GM13977 (cell line): ENCODE measurements at regions of chr3 and their contacts with region 1.

Region 1: GRCh38 chr3:194682694-194683310 is 2.9 kb upstream of the FAM43A start:
- DNase-seq: peak; percentile 85
- CTCF ChIP-seq: peak; percentile 81

Region 2: DNA sequence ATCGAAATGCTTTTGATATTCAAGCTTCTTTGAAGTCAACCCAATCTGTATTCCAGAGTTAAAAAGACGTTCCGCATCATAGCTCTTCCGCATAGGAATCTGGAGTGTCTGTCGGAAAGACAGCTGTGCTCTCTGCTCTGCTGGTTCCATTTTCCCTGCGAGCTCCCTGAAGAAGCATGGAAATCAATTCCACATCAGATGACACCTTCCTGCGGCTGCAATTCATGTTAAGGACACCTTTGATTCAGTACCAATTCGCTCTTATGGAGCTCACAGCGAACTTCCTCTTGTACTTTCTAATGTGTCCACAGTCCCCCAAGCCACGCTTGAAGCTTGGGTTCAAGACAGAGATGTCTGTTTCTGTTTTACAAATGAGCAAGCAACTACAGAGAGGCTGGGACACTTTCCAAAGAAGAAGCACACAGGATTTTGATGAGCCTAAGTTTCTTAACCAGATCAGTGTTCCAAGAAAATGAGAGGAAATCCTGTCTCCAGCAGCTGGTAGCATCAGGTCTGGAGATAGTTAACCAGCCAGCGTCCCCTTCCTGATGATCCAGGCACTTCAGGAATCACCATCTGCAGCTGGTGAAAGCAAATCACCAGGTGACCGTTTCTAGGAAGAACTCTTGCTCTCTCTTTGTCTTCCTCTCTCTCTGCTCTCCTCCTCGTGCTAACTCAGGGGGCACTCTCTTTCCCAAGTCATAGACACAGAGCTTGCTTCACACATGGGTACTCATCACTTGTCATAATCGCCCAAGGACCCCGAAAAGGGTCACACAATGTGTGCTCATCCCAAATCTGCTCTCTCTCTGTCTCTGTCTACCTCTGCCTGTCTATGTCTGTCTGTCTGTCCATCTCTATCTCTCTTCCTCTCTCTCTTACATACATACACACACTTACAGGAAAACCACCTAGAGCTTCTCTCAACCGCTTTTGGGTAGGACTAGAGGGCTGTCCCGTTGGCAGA is 284.6 kb after region 1 on chr3:
- in situ Hi-C with region 1: loop called (anchors 25 kb)
- DNase-seq: no peak
- CTCF ChIP-seq: no peak

Region 3: DNA sequence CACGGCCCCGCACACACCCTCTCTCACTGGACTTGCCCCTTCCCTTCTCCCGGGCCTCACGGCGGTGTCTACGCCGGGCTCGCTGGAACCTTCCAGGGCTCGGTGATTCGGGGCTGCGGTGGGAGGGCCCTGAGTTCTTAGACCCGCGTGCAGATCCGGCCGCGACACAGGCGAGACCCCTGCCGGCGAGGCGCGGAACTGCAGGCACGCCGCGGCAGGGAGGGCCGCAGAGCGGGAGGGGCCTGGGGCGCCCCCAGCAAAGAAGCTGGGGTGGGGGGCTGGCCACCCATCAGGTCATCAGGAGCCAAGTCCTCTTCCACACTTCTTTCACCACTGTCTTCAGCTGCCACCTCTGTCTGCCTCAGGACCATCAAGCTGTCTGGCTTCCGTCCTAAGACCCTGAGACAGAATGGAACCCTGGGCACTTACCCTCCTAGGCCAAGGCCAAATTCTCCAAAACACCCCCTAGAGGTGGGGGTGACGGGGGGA is 423.7 kb after region 1 on chr3:
- in situ Hi-C with region 1: loop called (anchors 10 kb)
- DNase-seq: peak; percentile 88
- CTCF ChIP-seq: peak; percentile 100

Region 4: DNA sequence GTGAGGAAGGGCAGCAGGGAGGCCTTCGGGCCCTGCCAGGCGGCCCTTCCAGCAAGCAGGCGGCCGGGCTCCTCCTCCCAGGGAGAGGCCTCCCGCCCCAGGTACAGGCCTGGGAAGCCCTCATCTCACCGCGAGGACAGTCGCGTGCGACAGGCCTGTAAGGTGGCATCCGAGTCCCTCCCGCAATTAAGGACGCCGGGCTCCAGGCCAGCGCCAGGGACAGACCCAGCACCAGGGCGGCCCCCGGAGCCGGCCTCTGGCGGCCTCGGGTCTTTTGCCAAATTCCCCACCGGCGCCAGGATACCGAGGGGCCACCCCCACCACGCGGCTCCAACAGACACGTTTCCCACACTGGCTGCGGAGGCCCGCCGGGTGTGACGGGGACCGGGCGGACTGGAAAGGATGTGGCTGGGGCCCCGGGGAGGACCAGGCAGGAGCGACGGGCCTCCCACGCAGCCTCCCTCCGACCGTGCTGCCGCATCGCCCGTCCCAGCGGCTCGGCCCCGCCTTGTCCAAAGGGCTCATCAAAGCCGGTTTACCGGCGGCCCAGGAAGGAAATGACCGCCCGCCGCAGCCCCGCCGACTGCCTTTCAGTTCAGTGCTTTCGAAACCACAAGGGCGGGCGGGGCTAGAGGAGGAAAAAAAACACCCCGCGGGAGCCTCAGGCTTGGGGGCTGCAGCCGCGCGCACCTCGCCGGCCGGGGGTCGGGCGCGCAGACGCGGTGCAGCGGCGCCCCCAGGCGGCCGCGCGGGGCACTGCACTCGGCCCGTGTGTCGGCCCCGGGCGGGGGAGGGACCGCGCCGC is 576.9 kb after region 1 on chr3:
- in situ Hi-C with region 1: loop called (anchors 10 kb)
- DNase-seq: peak; percentile 99
- CTCF ChIP-seq: peak; percentile 97

Region 5: DNA sequence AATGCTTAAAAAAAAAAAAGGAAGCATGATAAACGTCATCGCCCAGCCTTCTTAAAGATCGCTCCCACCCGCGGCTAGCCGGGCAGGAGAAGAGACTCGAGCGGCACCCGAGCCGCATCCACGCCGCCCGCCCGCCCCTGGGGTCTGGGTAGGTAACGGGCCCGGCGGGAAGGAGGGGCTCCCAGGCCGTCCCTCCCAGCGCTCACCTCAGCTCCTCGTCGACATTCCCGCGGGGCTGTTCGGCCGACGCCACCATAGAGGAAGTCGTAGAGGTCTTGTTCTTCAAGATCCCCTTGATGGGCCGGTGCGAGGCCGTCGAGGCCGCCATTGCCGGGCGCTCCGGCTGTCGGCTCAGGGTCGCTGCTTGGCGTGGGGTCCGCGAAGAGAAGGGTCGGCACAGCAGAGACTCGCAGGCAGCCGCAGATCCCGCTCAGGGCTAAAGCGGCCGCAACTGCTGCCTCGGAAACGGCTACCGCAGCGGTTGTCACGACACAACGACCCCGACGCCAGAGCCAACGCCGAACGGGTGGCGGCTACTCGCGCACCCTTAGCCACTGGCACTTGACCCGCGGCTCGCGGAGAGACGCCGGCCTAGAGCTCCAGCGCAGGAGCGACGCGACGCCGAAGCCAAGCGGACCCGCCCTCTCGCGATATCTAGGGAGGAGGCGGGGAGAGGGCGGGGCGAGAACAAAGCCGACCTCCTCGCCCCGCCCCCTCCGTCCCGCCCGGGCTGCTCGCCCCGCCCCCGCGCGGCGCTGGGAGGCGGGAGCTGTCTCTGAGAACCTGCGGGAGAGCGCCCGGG is 860.1 kb after region 1 on chr3 and contains the start of gene PPP1R2:
- in situ Hi-C with region 1: loop called (anchors 25 kb)
- DNase-seq: peak; percentile 95
- CTCF ChIP-seq: no peak